ENCODE measurements at regions of chr20 and their contacts with region 1.

Region 1: GRCh38 chr20:53915446-53916172 is 154.8 kb downstream of the BCAS1 start:
- DNase-seq: peak; percentile 98
- ATAC-seq: peak; percentile 96
- H3K4me3 Mint-ChIP-seq: peak overlapping the region; percentile 79
- H3K27ac Mint-ChIP-seq: peak overlapping the region; percentile 91
- H3K4me1 Mint-ChIP-seq: peaks cover 41% of the 10 kb centered on the region
- H3K27me3 Mint-ChIP-seq: no peaks in the 10 kb centered on the region

Region 2: DNA sequence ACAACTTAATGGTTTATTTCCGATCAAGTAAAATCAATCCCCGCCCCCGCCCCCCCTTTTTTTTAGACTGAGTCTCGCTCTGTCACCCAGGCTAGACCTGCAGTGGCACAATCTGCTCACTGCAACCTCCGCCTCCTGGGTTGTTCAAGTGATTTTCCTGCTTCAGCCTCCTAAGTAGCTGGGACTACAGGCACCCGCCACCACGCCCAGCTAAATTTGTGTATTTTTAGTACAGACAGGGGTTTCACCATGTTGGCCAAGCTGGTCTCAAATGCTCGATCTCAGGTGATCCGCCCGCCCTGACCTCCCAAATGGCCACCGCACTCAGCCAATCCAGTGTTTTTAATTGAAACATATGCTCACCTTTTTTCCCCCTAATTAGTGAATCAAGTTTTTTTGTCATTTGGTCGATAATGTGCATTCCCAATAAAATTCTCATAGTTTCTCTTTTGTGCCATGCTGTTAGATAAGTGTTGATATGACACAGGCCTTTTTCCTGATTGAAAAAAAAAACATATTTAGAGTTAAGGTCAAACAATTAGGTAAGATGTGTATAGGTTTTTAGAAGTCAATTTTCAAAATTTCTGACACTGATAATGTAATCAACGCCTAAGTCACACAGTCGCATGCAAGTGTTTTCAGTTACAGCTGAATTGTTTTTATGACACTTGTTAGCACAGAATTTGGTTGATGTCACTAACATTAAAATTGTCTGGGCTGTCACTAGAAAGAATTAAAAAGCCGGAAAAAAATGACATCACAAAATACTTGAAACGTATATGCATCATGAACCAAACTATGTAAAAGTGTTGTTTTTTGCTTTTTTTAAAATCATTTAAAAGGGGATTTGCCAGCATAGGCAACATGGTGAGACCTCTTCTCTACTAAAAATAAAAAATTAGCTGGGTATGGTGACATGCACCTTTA is 344.0 kb before region 1 on chr20:
- CTCF ChIA-PET with region 1: interaction called, 7 read pairs
- POLR2A ChIA-PET with region 1: interaction called, 11 read pairs
- intact Hi-C with region 1: no loop called
- DNase-seq: no peak
- ATAC-seq: no peak
- H3K4me3 Mint-ChIP-seq: no peak overlapping the region
- H3K27ac Mint-ChIP-seq: no peak overlapping the region
- H3K4me1 Mint-ChIP-seq: peaks cover 59% of the 10 kb centered on the region
- H3K27me3 Mint-ChIP-seq: no peaks in the 10 kb centered on the region

Region 3: DNA sequence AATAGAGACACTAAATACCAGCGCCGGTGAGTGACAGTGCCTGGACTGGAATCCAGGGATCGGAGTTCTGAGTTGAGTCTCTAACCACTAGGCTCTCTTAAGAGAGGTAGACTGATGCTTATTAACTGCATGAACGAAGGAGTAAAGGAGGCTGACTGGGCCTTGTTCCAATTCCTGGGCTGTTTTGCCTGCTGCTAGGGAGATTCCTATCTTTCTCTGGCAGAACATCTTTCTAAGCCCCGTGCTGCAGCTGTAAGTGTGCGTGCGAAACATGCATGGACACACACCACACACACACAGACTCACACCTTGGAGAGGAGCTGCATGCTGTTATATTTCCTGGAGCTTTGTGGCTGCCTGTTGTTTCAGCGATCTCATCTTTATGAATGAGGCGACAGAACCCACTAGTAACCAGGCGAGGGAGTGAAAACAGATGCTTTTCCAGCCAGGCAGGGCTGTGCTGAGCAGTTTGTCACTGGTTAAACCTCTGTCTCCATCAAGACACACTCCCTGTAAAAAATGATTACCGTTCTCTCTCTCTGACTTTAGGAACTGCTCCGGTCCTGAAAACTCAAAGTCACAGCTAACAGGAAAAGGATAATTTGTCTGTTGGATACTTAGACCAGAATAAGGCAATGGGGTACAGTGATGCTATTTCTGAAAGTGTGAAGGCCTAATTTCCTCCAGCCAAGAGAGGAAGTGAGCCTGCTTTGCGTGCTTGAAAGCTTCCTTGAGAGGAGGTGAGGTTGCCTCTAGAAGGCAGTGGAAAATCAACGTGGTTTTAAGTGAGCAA is 164.6 kb before region 1 on chr20:
- CTCF ChIA-PET with region 1: interaction called, 8 read pairs
- POLR2A ChIA-PET with region 1: no interaction called
- intact Hi-C with region 1: loop called (anchors 5 kb)
- DNase-seq: peak; percentile 60
- ATAC-seq: peak; percentile 70
- H3K4me3 Mint-ChIP-seq: peak overlapping the region; percentile 22
- H3K27ac Mint-ChIP-seq: peak overlapping the region; percentile 96
- H3K4me1 Mint-ChIP-seq: peaks cover 73% of the 10 kb centered on the region
- H3K27me3 Mint-ChIP-seq: no peaks in the 10 kb centered on the region

Region 4: DNA sequence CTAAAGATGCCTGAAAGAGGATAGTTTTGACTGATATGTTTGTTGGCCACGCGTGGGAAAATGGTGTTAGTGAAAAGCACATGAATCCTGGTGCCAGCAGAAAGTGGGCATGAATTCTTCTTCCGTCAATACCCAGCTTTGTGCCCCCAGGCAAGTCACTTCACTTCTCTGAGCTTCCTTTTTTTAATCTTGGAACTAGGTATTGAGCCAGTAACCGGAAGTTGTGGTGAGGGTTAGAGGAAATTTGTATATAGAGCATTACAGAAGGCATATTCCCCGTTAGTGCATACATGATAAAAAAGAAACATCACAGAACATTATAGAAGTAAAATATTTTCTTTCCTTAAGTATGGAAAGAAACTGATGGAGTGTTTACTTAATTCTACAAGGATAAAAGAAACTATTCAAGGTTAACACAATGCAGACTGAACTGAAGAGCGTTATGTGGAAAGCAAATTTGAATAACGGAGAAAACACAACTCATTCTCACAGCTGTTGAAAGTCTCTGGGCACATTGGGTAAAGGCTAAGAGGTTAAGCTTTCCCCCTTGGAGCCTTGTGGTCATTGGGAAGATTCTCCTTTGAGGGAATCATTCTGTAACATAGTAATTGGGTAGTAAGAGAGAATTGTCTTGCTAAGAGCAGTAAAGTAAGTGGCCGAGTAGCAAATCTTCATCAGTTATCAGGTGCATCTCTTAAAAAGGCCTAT is 68.3 kb before region 1 on chr20:
- CTCF ChIA-PET with region 1: interaction called, 15 read pairs
- POLR2A ChIA-PET with region 1: no interaction called
- intact Hi-C with region 1: loop called in 1 of 2 experiments (anchors 5 kb)
- DNase-seq: peak; percentile 16
- ATAC-seq: no peak
- H3K4me3 Mint-ChIP-seq: peak overlapping the region; percentile 41
- H3K27ac Mint-ChIP-seq: peak overlapping the region; percentile 69
- H3K4me1 Mint-ChIP-seq: peaks cover 64% of the 10 kb centered on the region
- H3K27me3 Mint-ChIP-seq: no peaks in the 10 kb centered on the region

Region 5: DNA sequence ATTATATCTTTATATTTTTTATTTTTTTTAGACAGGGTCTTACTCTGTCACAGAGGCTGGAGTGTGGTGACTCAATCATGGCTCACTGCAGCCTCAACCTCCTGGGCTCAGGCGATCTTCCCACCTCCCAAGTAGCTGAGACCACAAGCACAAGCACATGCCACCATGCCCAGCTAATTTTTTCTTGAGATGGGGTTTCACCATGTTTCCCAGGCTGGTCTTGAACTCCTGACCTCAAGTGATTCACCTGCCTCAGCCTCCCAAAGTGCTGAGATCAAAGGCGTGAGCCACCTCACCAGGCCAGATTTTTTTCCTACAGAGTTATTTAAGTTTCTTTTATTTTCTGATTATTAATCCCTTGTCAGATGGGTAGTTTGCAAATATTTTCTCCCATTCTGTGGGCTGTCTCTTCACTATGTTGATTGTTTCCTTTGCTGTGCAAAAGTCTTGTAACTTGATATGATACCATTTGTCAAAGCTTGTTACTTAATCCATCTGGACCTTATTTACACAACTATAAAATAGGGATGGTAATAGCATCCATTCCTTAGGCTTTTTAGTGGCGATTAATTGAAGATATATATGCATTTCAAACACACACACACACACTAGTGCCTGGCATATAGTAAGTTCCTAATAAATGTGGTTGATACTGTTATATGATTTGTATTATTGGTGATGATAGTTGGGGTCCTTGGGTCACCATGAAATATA is 32.4 kb before region 1 on chr20:
- CTCF ChIA-PET with region 1: interaction called, 11 read pairs
- POLR2A ChIA-PET with region 1: no interaction called
- intact Hi-C with region 1: no loop called
- DNase-seq: peak; percentile 30
- ATAC-seq: no peak
- H3K4me3 Mint-ChIP-seq: no peak overlapping the region
- H3K27ac Mint-ChIP-seq: no peak overlapping the region
- H3K4me1 Mint-ChIP-seq: peaks cover 50% of the 10 kb centered on the region
- H3K27me3 Mint-ChIP-seq: no peaks in the 10 kb centered on the region

Region 6: DNA sequence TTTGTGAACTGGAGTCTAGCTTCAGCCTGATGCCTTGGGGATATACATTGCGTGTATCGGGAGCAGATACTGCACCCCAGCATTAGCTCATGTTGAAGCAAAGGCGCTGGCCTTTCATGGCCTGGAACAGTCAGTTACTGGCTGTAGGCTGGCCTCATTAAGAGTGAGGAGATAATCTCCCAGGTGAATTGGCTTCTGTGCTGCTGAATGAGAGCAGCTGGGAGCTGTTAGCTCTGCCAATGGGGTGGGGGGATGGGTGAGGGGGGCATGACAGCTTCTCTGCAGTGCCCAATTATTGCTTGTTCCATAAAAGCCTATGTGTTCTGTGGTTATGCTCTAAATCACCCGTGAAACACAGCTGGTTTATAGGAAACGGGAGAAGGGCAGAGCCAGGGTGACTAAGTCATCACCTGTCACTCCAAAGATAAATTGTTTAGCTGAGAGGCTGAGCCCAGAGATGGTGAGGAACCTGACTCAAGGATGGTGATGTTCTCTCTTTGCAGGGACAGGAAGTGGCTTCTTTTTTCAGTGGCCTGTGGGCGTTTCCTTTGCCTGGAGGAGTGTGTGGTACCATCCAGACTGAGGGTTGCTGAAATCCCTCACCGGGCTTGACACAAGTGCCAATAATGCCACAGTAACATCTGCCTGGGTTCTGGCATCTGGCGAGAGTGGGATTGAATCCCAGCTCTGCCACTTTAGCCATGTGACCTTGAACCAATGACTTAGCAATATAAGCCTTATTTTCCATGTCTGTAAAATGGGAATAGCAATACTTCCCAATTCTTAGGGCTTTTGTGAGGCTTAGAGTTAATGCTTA is 16.1 kb before region 1 on chr20:
- CTCF ChIA-PET with region 1: interaction called, 44 read pairs
- POLR2A ChIA-PET with region 1: interaction called, 5 read pairs
- intact Hi-C with region 1: loop called in 1 of 2 experiments (anchors 1 kb)
- DNase-seq: peak; percentile 89
- ATAC-seq: peak; percentile 92
- H3K4me3 Mint-ChIP-seq: peak overlapping the region; percentile 10
- H3K27ac Mint-ChIP-seq: peak overlapping the region; percentile 92
- H3K4me1 Mint-ChIP-seq: peaks cover 49% of the 10 kb centered on the region
- H3K27me3 Mint-ChIP-seq: no peaks in the 10 kb centered on the region

Region 7: DNA sequence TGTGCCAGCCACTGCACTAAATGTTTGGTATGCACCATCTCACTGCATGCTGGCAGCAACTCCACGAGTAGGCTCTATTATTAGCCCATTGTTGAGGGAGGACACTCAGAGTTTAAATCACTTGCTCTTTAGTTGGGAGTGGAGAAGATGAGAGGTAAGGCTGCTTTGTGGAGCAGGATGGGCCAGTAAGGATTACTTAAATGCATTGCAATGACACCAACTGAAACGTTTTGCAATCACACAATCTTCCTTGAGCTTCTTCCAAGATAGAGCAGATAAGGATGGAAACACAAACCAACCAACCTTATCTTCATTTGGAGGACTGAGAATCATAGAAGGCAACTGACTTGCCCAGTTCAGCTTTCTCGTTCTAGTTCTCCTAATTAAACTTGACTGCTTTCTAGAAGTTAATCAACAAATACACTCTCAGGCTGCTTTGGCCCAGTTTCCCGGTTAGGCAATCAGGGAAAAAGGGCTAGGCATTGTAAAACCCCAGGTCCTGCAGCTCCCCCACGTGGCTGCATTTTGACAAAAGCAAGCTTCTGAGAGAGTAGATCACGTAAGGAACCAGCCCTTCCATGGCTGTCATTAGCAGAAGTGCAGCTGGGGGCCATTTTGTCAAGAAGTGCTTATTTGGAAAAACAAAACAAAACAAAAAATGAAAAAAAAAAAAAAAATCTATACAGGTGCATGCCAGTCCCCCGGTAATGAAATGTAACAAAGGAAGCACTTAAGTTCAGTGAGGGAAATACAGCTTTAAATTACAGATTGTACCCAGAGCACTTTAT is 24.2 kb after region 1 on chr20:
- CTCF ChIA-PET with region 1: interaction called, 17 read pairs
- POLR2A ChIA-PET with region 1: no interaction called
- intact Hi-C with region 1: no loop called
- DNase-seq: peak; percentile 88
- ATAC-seq: peak; percentile 88
- H3K4me3 Mint-ChIP-seq: no peak overlapping the region
- H3K27ac Mint-ChIP-seq: no peak overlapping the region
- H3K4me1 Mint-ChIP-seq: peaks cover 37% of the 10 kb centered on the region
- H3K27me3 Mint-ChIP-seq: no peaks in the 10 kb centered on the region